Naive thymus-derived CD4-positive, alpha-beta T cell (primary cell): ENCODE measurements at regions of chr13 and their contacts with region 1.

Region 1: DNA sequence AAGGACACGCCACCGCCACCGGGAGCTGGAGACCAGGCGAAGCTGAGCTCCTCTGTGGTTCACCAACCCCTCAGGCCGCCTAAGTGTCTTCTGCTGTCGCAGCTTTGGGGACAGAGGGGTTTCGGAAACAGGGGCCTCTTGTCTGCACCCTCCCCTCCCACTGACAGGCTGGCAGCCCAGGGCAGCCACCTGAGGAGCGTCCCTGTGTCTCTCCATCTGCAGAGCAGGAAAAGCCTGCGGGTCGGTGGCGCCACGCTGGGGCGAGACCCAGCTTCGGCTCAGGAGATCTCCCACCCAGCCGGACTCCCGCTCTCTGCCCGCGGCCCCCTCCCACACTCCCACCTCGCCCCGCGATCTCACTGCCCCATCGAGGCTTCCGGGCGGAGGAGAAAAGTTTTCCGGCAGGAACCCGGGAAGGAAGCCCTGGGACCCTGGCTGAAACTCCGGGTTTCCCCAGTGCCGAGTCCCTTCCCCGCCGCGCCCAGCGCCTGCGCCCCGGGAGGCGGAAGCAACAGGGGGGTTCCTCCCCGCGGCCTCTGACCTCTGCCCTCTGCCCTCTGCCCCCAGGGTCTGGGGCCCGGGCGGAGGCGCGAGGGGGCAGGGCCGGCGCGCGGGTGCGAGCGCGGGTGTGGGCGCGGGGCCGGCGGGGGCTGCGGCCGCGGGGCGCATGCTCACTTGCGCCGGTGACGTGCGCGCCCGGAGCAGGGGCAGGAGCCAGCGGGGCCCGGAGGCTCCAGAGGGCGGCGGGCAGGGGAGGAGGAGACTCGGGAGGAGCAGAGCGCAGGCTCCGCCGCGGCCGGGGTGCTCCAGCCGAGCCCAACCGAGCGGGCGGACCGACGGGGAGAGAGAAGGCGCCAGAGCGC is at the start of gene ATP11A:
- DNase-seq: peak; percentile 67 to 90 (median 74)
- ATAC-seq: peak; percentile 85
- H3K4me3 ChIP-seq: peak within 1 kb of the TSS; percentile 78
- H3K4me3 Mint-ChIP-seq: peak within 1 kb of the TSS; percentile 79 to 96 (median 94)
- H3K27ac ChIP-seq: peak within 1 kb of the TSS; percentile 88
- H3K27ac Mint-ChIP-seq: peak within 1 kb of the TSS; percentile 79 to 96 (median 90)
- H3K4me1 ChIP-seq: peaks cover 15 to 26% of the 10 kb centered on the region in 2 donors
- H3K4me1 Mint-ChIP-seq: peaks cover 39 to 54% (median 50%) of the 10 kb centered on the region in 7 donors
- H3K27me3 ChIP-seq: no peaks in the 10 kb centered on the region
- H3K27me3 Mint-ChIP-seq: no peaks in the 10 kb centered on the region
- total RNA-seq, gene ATP11A: 45.0 to 111 (median 79.8) TPM

Region 2: DNA sequence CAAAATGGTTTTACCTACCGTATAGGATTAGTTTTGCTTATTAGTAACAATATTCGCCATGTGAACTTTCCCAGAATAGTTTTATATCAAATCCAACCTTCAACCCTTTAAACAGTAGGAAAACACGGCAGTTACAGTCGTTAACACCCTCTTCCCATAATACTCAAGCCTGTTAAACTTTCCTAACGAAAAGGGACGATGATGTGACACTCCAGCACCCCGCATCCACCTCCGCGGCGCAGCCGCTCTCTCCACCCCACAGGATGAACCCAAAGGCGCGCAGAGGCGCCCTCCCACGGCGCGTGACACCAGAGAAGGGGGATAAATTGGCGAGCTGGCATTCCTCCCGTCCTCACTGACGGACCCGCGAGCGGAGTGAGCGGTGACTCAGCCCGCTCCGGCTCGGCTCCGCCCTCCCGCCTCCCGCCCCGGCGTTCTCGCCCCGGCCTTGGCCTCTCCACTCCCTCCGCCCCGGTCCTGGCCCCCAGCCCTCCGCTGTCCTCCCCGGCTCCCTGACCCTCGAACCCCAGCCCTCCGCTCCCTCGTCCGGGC is 102.2 kb before region 1 on chr13:
- CTCF ChIA-PET with region 1: no interaction called
- POLR2A ChIA-PET with region 1: interaction called, 3 read pairs
- intact Hi-C with region 1: loop called (anchors 1 to 2 kb)
- DNase-seq: peak; percentile 32 to 82 (median 41)
- ATAC-seq: peak; percentile 69
- H3K4me3 ChIP-seq: peak overlapping the region; percentile 78
- H3K4me3 Mint-ChIP-seq: peak overlapping the region; percentile 86 to 98 (median 94)
- H3K27ac ChIP-seq: peak overlapping the region; percentile 81
- H3K27ac Mint-ChIP-seq: peak overlapping the region; percentile 69 to 94 (median 89)
- H3K4me1 ChIP-seq: peaks cover 18 to 20% of the 10 kb centered on the region in 2 donors
- H3K4me1 Mint-ChIP-seq: peaks cover 37 to 58% (median 43%) of the 10 kb centered on the region in 7 donors
- H3K27me3 ChIP-seq: no peaks in the 10 kb centered on the region
- H3K27me3 Mint-ChIP-seq: no peaks in the 10 kb centered on the region

Region 3: DNA sequence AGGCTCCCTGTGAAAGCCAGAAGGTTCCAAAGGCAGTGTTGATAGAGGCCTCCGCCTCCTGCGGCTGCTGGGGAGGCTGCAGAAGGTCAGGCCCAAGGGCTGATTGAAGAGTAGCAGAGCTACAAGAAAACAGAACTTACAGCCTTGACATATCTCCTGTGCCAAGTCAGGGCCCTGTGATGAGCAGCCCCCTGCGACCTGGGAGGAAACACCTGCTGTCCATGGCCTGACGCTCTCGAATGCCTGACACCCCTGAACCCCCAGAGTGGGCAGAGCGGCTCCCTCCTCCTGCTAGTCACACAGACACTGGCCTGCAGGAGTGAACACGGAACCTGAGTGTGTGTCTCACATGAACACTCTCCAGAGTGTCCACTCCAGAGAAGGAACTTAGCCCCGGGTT is 63.4 kb before region 1 on chr13:
- CTCF ChIA-PET with region 1: no interaction called
- POLR2A ChIA-PET with region 1: no interaction called
- intact Hi-C with region 1: no loop called
- DNase-seq: no peak
- ATAC-seq: no peak
- H3K4me3 ChIP-seq: no peak overlapping the region
- H3K4me3 Mint-ChIP-seq: no peak overlapping the region
- H3K27ac ChIP-seq: no peak overlapping the region
- H3K27ac Mint-ChIP-seq: no peak overlapping the region
- H3K4me1 ChIP-seq: no peaks in the 10 kb centered on the region
- H3K4me1 Mint-ChIP-seq: peaks cover 0 to 1% (median 0%) of the 10 kb centered on the region in 7 donors
- H3K27me3 ChIP-seq: no peaks in the 10 kb centered on the region
- H3K27me3 Mint-ChIP-seq: peaks cover 5 to 13% (median 7%) of the 10 kb centered on the region in 5 donors

Region 4: DNA sequence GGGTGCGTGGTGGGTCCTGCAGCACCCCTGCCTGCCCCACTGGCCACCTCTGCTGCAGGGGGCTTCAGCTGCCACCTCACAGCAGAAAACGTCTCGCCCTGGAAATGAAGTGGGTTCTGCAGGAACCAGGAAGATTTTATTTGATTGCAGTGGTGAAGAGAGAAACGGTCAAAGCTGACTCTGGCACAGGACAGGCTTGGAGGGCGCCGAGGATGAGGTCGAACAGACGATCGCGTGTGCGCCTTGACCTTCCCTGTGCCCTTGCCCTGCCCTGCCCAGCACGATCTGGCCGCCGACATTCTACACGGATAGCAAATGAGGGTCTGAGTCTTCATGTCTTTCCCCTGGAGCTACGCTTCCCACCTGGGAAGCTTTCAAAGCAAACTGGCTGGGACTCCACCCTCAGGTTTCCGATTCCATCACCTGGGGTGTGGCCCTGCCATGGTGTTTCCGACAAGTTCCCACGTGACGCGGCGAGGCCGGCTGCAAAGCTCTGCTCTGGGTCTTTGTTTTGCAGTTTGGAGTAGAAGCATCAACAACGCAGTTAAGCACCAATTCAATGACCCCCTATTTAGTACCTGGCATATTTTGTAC is 51.3 kb before region 1 on chr13:
- CTCF ChIA-PET with region 1: interaction called, 5 read pairs
- POLR2A ChIA-PET with region 1: interaction called, 3 read pairs
- intact Hi-C with region 1: loop called (anchors 1 to 2 kb)
- DNase-seq: peak in 1 of 9 donors; percentile 4
- ATAC-seq: no peak
- H3K4me3 ChIP-seq: no peak overlapping the region
- H3K4me3 Mint-ChIP-seq: peak overlapping the region in 4 of 10 donors; percentile 4 to 41 (median 36)
- H3K27ac ChIP-seq: no peak overlapping the region
- H3K27ac Mint-ChIP-seq: no peak overlapping the region
- H3K4me1 ChIP-seq: no peaks in the 10 kb centered on the region
- H3K4me1 Mint-ChIP-seq: peaks cover 4 to 35% (median 9%) of the 10 kb centered on the region in 7 donors
- H3K27me3 ChIP-seq: no peaks in the 10 kb centered on the region
- H3K27me3 Mint-ChIP-seq: peaks cover 12 to 31% (median 25%) of the 10 kb centered on the region in 5 donors

Region 5: DNA sequence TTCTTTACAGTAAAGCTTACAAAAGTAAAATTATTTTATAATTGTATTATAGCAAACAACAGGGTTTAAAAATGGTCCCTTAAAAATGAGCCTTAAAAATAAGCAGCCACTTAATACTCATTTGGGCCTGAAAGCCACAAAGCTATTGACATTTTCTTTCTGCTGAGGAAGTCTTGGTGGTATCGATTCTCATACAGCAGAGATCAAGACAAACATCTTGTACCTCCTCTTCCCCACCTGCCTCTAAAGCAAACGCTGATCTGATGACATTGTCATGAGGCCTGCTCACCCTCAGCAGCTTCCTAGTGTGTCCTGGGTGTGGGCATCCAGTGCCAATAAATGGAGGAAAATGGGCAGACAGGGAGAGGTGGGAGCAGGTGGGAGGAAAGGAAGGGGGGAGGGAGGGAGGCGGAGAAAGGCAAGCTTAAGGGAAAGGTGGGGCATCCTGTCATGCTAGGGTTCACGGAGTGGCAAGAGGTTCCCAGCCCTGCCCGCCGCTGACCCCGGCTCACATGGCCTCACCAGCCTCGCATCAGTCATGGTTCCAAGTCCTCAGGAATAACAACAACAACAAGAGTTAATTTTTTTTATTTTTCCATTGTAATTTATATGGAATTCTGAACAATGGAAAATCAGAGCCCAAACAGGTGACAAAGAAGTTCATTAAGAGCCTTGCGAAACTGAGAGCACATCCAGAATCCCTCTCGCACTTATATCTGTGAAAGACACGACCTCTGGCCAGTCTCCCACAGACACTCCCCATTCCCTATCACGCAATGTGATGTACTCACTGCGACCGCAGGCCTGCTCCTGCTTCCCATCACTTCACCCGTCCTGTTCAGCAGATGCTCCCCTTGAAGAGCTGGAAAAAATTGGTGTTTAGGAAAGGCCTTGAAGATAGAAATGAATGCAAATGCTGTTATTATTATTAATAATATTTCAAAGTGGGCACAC is 14.8 kb before region 1 on chr13:
- CTCF ChIA-PET with region 1: no interaction called
- POLR2A ChIA-PET with region 1: interaction called, 3 read pairs
- intact Hi-C with region 1: loop called (anchors 1 to 2 kb)
- DNase-seq: no peak
- ATAC-seq: peak; percentile 37
- H3K4me3 ChIP-seq: no peak overlapping the region
- H3K4me3 Mint-ChIP-seq: peak overlapping the region in 9 of 10 donors; percentile 16 to 77 (median 61)
- H3K27ac ChIP-seq: peak overlapping the region; percentile 12
- H3K27ac Mint-ChIP-seq: peak overlapping the region in 6 of 9 donors; percentile 1 to 79 (median 64)
- H3K4me1 ChIP-seq: peaks cover 0 to 16% of the 10 kb centered on the region in 2 donors
- H3K4me1 Mint-ChIP-seq: peaks cover 8 to 34% (median 15%) of the 10 kb centered on the region in 7 donors
- H3K27me3 ChIP-seq: no peaks in the 10 kb centered on the region
- H3K27me3 Mint-ChIP-seq: peaks cover 0 to 8% (median 0%) of the 10 kb centered on the region in 5 donors

Region 6: DNA sequence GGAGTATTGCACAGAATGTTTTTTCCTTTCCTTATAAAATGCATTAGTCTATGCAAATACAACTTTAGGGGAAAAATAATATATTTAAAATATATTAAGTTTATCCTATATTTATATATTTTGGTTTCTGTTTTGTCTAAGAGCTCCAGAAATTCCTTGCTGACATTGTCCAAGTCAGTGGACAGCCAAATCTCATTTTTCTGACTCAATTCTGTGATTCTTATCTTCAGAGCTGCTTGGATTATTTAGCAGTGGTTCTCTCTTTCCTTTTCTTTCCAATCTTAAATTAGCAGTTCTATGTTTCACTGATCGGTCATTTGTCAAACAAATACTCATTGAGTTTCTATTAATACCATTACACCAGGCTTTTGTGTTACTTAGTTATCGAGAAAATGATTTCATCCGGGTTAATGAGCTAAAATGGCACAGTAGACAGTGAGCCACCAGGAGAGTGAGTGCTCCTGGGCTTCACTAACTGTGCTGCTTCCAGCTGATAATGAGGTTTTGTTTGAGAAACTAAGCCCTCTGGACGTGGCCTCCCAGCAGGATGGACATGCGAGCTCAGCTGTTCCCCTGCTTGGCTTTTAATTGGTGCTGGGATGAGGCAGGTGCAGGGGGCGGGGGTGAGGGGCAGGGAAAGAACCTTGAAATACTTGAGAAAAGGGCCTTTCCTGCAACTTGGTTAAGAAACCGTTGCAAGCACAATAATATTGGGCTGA is 44.3 kb after region 1 on chr13:
- CTCF ChIA-PET with region 1: no interaction called
- POLR2A ChIA-PET with region 1: no interaction called
- intact Hi-C with region 1: no loop called
- DNase-seq: no peak
- ATAC-seq: no peak
- H3K4me3 ChIP-seq: no peak overlapping the region
- H3K4me3 Mint-ChIP-seq: no peak overlapping the region
- H3K27ac ChIP-seq: no peak overlapping the region
- H3K27ac Mint-ChIP-seq: no peak overlapping the region
- H3K4me1 ChIP-seq: no peaks in the 10 kb centered on the region
- H3K4me1 Mint-ChIP-seq: peaks cover 2 to 37% (median 19%) of the 10 kb centered on the region in 7 donors
- H3K27me3 ChIP-seq: no peaks in the 10 kb centered on the region
- H3K27me3 Mint-ChIP-seq: no peaks in the 10 kb centered on the region

Region 7: DNA sequence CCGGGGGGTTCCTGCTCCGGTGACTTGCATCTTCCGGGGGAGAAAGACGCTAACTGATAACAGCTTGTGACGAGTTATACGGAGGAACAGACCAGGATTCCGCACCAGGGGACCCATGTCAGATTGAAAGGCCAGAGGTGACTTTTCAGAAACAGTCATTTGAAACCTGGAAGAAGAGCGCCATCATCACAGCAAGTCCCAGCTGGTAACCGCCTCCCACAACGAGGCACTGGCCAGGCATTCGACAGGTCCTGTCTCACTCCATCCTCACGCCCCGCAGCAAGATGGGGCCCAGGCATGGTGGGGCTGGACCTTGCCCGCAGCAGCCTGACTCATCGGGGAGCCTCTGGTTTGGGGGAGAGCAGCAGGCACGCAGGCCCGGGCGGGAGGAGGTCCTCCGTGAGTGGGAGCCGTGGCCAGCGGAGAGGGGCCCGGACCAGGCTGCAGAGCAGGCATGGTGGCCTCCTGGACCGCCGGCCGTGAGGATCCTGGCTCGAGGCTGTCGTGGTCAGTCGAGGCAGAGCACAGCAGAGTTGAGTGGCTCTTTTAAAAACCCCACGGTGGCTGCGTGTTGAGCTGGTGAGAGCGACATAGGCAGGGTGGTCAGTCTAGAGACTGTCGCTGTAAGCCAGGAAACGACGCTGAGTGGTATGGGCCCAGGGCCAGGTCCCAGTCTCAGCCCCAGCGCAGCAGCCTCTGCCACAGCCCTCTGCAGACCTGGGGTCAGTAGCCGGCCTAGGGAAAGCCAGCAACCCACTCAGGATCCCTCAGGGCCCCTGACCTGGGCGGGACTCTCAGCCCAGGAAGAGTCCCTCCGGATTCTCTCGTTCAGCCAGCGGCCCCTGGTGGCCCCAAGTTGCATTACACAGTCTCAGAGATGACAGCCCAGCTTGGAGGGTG is 184.6 kb after region 1 on chr13:
- CTCF ChIA-PET with region 1: no interaction called
- POLR2A ChIA-PET with region 1: no interaction called
- intact Hi-C with region 1: loop called in 1 of 2 experiments (anchors 5 kb)
- DNase-seq: peak in 5 of 9 donors; percentile 25 to 75 (median 50)
- ATAC-seq: peak; percentile 84
- H3K4me3 ChIP-seq: peak overlapping the region; percentile 8
- H3K4me3 Mint-ChIP-seq: peak overlapping the region in 8 of 10 donors; percentile 4 to 78 (median 67)
- H3K27ac ChIP-seq: no peak overlapping the region
- H3K27ac Mint-ChIP-seq: peak overlapping the region; percentile 86 to 95 (median 90)
- H3K4me1 ChIP-seq: peaks cover 0 to 17% of the 10 kb centered on the region in 2 donors
- H3K4me1 Mint-ChIP-seq: peaks cover 21 to 33% (median 28%) of the 10 kb centered on the region in 7 donors
- H3K27me3 ChIP-seq: no peaks in the 10 kb centered on the region
- H3K27me3 Mint-ChIP-seq: peaks cover 0 to 4% (median 0%) of the 10 kb centered on the region in 5 donors